Naive thymus-derived CD4-positive, alpha-beta T cell (primary cell): ENCODE measurements at regions of chr15 and their contacts with region 1.

Region 1: GRCh38 chr15:84588053-84588874 is 12.5 kb upstream of the ZSCAN2 start:
- DNase-seq: peak; percentile 68 to 84 (median 79)
- ATAC-seq: peak; percentile 100
- H3K4me3 ChIP-seq: no peak overlapping the region
- H3K4me3 Mint-ChIP-seq: peak overlapping the region in 8 of 10 donors; percentile 30 to 75 (median 63)
- H3K27ac ChIP-seq: no peak overlapping the region
- H3K27ac Mint-ChIP-seq: no peak overlapping the region
- H3K4me1 ChIP-seq: no peaks in the 10 kb centered on the region
- H3K4me1 Mint-ChIP-seq: peaks cover 0 to 6% (median 5%) of the 10 kb centered on the region in 7 donors
- H3K27me3 ChIP-seq: no peaks in the 10 kb centered on the region
- H3K27me3 Mint-ChIP-seq: peaks cover 0 to 34% (median 9%) of the 10 kb centered on the region in 5 donors

Region 2: GRCh38 chr15:84552896-84553295 is 35.4 kb before region 1 on chr15:
- CTCF ChIA-PET with region 1: no interaction called
- POLR2A ChIA-PET with region 1: no interaction called
- intact Hi-C with region 1: no loop called
- DNase-seq: no peak
- ATAC-seq: no peak
- H3K4me3 ChIP-seq: no peak overlapping the region
- H3K4me3 Mint-ChIP-seq: no peak overlapping the region
- H3K27ac ChIP-seq: no peak overlapping the region
- H3K27ac Mint-ChIP-seq: no peak overlapping the region
- H3K4me1 ChIP-seq: no peaks in the 10 kb centered on the region
- H3K4me1 Mint-ChIP-seq: peaks cover under 1 to 17% (median 7%) of the 10 kb centered on the region in 7 donors
- H3K27me3 ChIP-seq: no peaks in the 10 kb centered on the region
- H3K27me3 Mint-ChIP-seq: no peaks in the 10 kb centered on the region

Region 3: DNA sequence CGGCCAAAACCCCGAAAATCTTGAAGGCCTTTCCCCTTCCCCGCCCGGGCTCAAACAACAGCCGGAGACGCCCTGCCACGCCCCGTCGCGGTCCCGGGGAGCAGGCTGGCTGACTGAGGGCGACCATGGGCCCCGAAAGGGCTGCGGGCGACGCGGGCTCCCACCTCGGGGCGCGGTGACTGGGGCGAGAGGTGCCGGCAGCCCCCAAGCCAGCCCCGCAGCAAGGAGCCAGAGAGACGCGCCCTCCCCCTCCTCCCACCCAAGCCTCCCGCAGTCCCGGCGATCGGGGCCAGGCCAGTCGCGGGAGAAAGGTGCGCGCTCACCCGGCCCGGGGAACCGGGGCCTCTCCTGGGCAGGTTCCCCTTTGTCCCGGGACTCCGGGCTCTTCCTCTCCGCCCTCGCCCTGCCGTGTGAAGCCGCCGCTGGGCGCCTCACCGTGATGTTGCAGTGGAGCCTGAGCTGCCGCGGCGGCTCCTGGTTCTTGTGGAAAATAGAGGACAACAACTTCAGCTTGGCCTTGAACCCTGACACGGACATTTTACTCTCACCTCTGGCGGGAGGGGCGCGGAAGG is 18.0 kb before region 1 on chr15:
- CTCF ChIA-PET with region 1: interaction called, 18 read pairs
- POLR2A ChIA-PET with region 1: interaction called, 4 read pairs
- intact Hi-C with region 1: no loop called
- DNase-seq: peak; percentile 13 to 68 (median 40)
- ATAC-seq: peak; percentile 63
- H3K4me3 ChIP-seq: peak overlapping the region; percentile 67
- H3K4me3 Mint-ChIP-seq: peak overlapping the region; percentile 78 to 97 (median 86)
- H3K27ac ChIP-seq: peak overlapping the region; percentile 67
- H3K27ac Mint-ChIP-seq: peak overlapping the region; percentile 65 to 93 (median 82)
- H3K4me1 ChIP-seq: peaks cover 0 to 5% of the 10 kb centered on the region in 2 donors
- H3K4me1 Mint-ChIP-seq: peaks cover 0 to 20% (median 10%) of the 10 kb centered on the region in 7 donors
- H3K27me3 ChIP-seq: no peaks in the 10 kb centered on the region
- H3K27me3 Mint-ChIP-seq: peaks cover 0 to 3% (median 0%) of the 10 kb centered on the region in 5 donors

Region 4: DNA sequence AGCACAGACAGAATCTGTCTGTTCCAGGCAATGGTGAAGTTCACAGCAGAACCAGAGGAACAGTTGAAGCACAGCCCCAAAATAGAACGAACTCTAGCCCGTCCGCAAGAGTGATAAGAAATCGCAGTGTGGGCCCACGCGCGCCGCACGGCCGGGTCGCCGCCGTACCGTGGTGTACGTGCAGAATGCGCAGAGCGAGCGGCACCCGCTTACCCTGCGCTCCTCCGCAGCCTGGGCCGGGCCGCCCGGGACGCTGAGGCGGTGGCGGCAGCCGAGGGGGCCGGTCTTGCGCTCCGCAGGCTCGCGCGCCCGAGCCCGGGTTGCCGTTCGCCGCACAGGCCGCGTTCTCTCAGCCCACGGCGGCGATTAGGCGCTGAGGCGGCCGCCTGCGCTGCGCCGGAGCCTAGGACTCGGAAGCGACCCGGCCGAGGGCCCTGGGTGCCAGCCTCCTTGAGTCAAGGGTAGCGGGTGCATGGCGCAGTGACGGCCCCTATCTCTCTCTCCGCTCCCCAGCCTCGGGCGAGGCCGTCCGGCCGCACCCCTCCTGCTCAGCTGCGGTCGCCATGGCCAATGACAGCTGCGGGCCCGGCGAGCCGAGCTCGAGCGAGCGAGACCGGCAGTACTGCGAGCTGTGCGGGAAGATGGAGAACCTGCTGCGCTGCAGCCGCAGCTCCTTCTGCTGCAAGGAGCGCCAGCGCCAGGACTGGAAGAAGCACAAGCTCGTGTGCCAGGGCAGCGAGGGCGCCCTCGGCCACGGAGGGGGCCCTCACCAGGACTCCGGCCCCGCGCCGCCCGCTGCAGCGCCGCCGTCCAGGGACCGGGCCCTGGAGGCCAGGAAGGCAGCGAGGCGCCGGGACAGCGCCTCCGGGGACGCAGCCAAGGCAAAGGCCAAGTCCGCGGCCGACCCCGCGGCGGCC is 45.3 kb after region 1 on chr15:
- CTCF ChIA-PET with region 1: interaction called, 15 read pairs
- POLR2A ChIA-PET with region 1: interaction called, 7 read pairs
- intact Hi-C with region 1: loop called (anchors 1 kb)
- DNase-seq: peak; percentile 48 to 77 (median 66)
- ATAC-seq: peak; percentile 67
- H3K4me3 ChIP-seq: peak overlapping the region; percentile 96
- H3K4me3 Mint-ChIP-seq: peak overlapping the region; percentile 84 to 99 (median 98)
- H3K27ac ChIP-seq: peak overlapping the region; percentile 78
- H3K27ac Mint-ChIP-seq: peak overlapping the region; percentile 79 to 98 (median 93)
- H3K4me1 ChIP-seq: peaks cover 26 to 40% of the 10 kb centered on the region in 2 donors
- H3K4me1 Mint-ChIP-seq: peaks cover 23 to 58% (median 53%) of the 10 kb centered on the region in 7 donors
- H3K27me3 ChIP-seq: no peaks in the 10 kb centered on the region
- H3K27me3 Mint-ChIP-seq: no peaks in the 10 kb centered on the region

Region 5: DNA sequence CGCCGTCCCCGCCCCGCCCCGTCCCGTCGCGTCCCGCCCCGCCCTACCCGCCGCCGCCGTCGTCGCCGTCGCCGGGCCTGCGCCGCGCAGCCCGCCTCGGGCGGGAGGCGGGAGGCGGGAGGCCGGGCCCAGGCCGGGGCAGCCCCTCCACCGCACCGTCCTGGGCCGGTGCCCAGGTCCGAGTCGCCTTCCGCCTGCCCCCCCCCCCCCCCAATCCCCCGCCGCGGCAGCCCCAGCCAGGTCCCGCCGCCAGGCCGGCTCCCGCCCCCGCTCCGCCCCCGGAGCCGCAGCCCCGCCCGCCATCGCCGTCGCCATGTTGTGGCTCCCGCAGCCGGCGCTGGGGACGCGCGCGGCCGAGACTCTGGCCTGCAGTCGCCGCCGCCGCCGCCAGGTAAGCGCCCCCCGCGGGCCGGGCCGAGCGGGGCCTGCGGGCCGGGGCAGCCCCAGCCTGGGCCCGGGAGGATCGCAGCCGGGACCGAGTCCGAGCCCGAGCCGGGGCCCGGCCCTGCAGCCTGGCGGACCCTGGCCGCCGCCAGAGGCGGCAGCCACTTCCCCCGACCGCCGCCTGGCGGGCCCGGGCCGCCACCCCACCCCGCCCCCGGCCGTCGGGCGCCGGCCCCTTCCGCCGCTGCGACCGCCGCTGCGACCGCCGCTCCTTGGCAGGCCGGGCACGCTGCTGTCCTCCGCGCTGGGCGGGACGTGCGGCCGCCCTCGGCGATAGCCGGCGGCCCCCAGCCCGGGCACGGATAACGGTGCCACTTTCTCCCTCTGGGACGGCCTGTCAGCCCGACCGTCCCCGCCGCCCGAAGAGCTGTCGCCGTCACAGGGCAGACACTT is 160.2 kb after region 1 on chr15 and contains the start of gene ZNF592:
- CTCF ChIA-PET with region 1: no interaction called
- POLR2A ChIA-PET with region 1: no interaction called
- intact Hi-C with region 1: loop called in 1 of 2 experiments (anchors 1 kb)
- DNase-seq: peak; percentile 69 to 85 (median 79)
- ATAC-seq: peak; percentile 86
- H3K4me3 ChIP-seq: peak within 1 kb of the TSS; percentile 96
- H3K4me3 Mint-ChIP-seq: peak within 1 kb of the TSS; percentile 94 to 99 (median 99)
- H3K27ac ChIP-seq: peak within 1 kb of the TSS; percentile 89
- H3K27ac Mint-ChIP-seq: peak within 1 kb of the TSS; percentile 94 to 100 (median 99)
- H3K4me1 ChIP-seq: peaks cover 29 to 37% of the 10 kb centered on the region in 2 donors
- H3K4me1 Mint-ChIP-seq: peaks cover 53 to 78% (median 71%) of the 10 kb centered on the region in 7 donors
- H3K27me3 ChIP-seq: no peaks in the 10 kb centered on the region
- H3K27me3 Mint-ChIP-seq: no peaks in the 10 kb centered on the region
- total RNA-seq, gene ZNF592: 36.6 to 39.0 (median 37.6) TPM

Region 6: GRCh38 chr15:84818261-84819131 is 230.2 kb after region 1 on chr15:
- CTCF ChIA-PET with region 1: no interaction called
- POLR2A ChIA-PET with region 1: interaction called, 5 read pairs
- intact Hi-C with region 1: loop called in 1 of 2 experiments (anchors 1 kb)
- DNase-seq: peak in 5 of 9 donors; percentile 6 to 48 (median 25)
- ATAC-seq: peak; percentile 6
- H3K4me3 ChIP-seq: no peak overlapping the region
- H3K4me3 Mint-ChIP-seq: peak overlapping the region in 6 of 10 donors; percentile 28 to 70 (median 52)
- H3K27ac ChIP-seq: no peak overlapping the region
- H3K27ac Mint-ChIP-seq: peak overlapping the region in 6 of 9 donors; percentile 14 to 78 (median 57)
- H3K4me1 ChIP-seq: peaks cover 0 to 10% of the 10 kb centered on the region in 2 donors
- H3K4me1 Mint-ChIP-seq: peaks cover 6 to 20% (median 10%) of the 10 kb centered on the region in 7 donors
- H3K27me3 ChIP-seq: no peaks in the 10 kb centered on the region
- H3K27me3 Mint-ChIP-seq: peaks cover 6 to 19% (median 11%) of the 10 kb centered on the region in 5 donors

Region 7: DNA sequence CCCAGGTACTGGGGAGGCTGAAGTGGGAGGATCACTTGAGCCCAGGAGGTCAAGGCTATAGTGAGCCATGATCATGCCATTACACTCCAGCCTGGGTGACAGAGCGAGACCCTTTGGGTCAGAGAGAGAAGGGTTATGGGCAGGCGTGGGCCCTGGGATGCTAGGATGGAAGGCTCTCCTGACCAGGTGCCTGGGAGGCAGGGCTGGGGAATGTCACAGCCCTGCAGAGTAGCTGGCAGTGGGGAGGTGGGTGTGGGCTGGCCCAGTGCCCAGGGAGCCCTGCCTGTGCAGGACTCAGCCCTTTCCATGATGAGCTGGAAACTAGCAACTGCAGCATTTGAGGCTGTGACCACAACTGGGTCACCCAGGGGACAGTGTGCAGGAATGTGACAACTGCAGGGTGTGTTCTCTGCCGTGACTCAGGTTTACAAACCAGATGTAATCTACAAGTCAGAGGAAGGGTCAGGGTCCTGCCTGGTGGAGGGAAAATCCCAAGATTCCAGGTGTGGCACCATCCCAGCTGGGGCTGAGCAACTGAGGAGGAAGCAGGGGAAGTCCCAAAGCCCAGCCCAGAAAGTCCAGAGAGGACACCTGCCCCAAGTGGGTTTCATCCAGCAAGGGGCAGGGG is 341.6 kb after region 1 on chr15:
- CTCF ChIA-PET with region 1: interaction called, 19 read pairs
- POLR2A ChIA-PET with region 1: interaction called, 3 read pairs
- intact Hi-C with region 1: loop called (anchors 1 kb)
- DNase-seq: no peak
- ATAC-seq: no peak
- H3K4me3 ChIP-seq: no peak overlapping the region
- H3K4me3 Mint-ChIP-seq: no peak overlapping the region
- H3K27ac ChIP-seq: no peak overlapping the region
- H3K27ac Mint-ChIP-seq: no peak overlapping the region
- H3K4me1 ChIP-seq: peaks cover 0 to 4% of the 10 kb centered on the region in 2 donors
- H3K4me1 Mint-ChIP-seq: peaks cover 5 to 8% (median 6%) of the 10 kb centered on the region in 7 donors
- H3K27me3 ChIP-seq: no peaks in the 10 kb centered on the region
- H3K27me3 Mint-ChIP-seq: no peaks in the 10 kb centered on the region